GM12878 (cell line): ENCODE measurements at regions of chr4 and their contacts with region 1.

Region 1: GRCh38 chr4:85747882-85748491 is 273.0 kb downstream of the ARHGAP24 start:
- DNase-seq: no peak
- ATAC-seq: peak; percentile 95
- H3K4me3 ChIP-seq: no peak overlapping the region
- H3K27ac ChIP-seq: no peak overlapping the region
- H3K4me1 ChIP-seq: no peaks in the 10 kb centered on the region
- H3K27me3 ChIP-seq: no peaks in the 10 kb centered on the region; a peak in 1 of 4 replicates
- CTCF ChIP-seq: peak; percentile 74 to 79 (median 75)
- EP300 ChIP-seq: no peak
- POLR2A ChIP-seq: no peak
- RAD21 ChIP-seq: peak; percentile 98

Region 2: GRCh38 chr4:85092943-85093342 is 655.0 kb before region 1 on chr4:
- CTCF ChIA-PET with region 1: no interaction called
- POLR2A ChIA-PET with region 1: no interaction called
- RAD21 ChIA-PET with region 1: no interaction called
- SMC1A ChIA-PET with region 1: no interaction called
- in situ Hi-C with region 1: no loop called
- intact Hi-C with region 1: no loop called
- DNase-seq: no peak
- ATAC-seq: no peak
- H3K4me3 ChIP-seq: no peak overlapping the region
- H3K27ac ChIP-seq: no peak overlapping the region
- H3K4me1 ChIP-seq: no peaks in the 10 kb centered on the region
- H3K27me3 ChIP-seq: no peaks in the 10 kb centered on the region
- CTCF ChIP-seq: no peak
- EP300 ChIP-seq: no peak
- POLR2A ChIP-seq: no peak
- RAD21 ChIP-seq: no peak

Region 3: DNA sequence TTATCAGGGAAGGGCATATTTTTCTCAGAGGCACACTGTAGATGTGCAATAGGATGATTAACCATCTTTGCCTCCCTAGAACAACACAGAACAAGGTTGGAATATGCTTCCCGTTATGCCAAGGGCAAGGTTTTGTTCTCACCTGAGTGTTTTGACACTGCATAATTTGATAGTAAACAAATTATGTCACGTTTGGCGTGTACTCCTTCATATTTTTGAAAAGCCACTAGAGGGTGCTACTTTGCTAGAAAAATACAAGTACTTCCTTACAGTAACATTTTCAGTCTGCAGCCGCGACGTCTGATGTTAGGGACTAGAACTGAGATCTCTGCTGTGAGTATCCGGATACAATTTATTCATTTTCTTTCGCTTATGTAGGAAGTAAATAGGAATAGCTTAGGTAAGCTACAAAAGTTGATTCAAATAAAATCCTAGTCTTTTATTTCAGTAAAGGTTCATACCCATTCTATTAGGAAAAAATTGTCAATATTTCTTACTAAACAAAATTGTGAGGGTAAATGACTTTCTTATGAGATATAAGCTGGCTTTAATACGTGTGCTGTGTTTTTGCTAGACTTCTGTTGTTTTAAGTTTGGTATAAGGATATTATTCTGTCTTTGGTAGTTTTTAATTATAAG is 600.4 kb before region 1 on chr4:
- CTCF ChIA-PET with region 1: interaction called, 35 read pairs
- POLR2A ChIA-PET with region 1: no interaction called
- RAD21 ChIA-PET with region 1: interaction called, 16 read pairs
- SMC1A ChIA-PET with region 1: interaction called, 12 read pairs
- in situ Hi-C with region 1: loop called (anchors 5 kb)
- intact Hi-C with region 1: loop called (anchors 1 kb)
- DNase-seq: peak; percentile 11
- ATAC-seq: peak; percentile 93
- H3K4me3 ChIP-seq: no peak overlapping the region
- H3K27ac ChIP-seq: no peak overlapping the region
- H3K4me1 ChIP-seq: no peaks in the 10 kb centered on the region
- H3K27me3 ChIP-seq: no peaks in the 10 kb centered on the region
- CTCF ChIP-seq: peak; percentile 51 to 67 (median 53); a peak in 5 of 6 replicates
- EP300 ChIP-seq: no peak
- POLR2A ChIP-seq: no peak
- RAD21 ChIP-seq: peak; percentile 63

Region 4: DNA sequence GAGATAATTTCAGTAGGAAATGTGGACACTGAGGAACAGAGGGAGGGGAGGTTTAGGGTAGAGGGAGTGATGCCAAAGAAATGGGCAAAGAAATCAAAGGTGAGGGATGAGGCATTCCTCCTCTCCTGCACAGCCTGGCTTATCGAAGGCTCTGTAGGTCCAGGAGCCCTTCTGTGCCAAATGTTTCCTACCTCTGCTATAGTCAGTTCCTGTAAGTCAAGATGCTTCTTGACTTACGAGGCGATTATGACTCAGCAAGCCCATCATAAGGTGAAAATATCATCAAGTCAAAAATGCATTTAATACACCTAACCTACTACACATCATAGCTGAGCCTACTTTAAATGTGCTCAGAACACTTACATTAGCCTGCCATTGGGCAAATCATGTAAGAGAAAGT is 333.0 kb before region 1 on chr4:
- CTCF ChIA-PET with region 1: interaction called, 57 read pairs
- POLR2A ChIA-PET with region 1: interaction called, 4 read pairs
- RAD21 ChIA-PET with region 1: interaction called, 16 read pairs
- SMC1A ChIA-PET with region 1: interaction called, 22 read pairs
- in situ Hi-C with region 1: loop called (anchors 5 kb)
- intact Hi-C with region 1: loop called (anchors 1 kb)
- DNase-seq: no peak
- ATAC-seq: no peak
- H3K4me3 ChIP-seq: no peak overlapping the region
- H3K27ac ChIP-seq: no peak overlapping the region
- H3K4me1 ChIP-seq: no peaks in the 10 kb centered on the region
- H3K27me3 ChIP-seq: no peaks in the 10 kb centered on the region; a peak in 1 of 4 replicates
- CTCF ChIP-seq: no peak
- EP300 ChIP-seq: no peak
- POLR2A ChIP-seq: no peak
- RAD21 ChIP-seq: no peak

Region 5: DNA sequence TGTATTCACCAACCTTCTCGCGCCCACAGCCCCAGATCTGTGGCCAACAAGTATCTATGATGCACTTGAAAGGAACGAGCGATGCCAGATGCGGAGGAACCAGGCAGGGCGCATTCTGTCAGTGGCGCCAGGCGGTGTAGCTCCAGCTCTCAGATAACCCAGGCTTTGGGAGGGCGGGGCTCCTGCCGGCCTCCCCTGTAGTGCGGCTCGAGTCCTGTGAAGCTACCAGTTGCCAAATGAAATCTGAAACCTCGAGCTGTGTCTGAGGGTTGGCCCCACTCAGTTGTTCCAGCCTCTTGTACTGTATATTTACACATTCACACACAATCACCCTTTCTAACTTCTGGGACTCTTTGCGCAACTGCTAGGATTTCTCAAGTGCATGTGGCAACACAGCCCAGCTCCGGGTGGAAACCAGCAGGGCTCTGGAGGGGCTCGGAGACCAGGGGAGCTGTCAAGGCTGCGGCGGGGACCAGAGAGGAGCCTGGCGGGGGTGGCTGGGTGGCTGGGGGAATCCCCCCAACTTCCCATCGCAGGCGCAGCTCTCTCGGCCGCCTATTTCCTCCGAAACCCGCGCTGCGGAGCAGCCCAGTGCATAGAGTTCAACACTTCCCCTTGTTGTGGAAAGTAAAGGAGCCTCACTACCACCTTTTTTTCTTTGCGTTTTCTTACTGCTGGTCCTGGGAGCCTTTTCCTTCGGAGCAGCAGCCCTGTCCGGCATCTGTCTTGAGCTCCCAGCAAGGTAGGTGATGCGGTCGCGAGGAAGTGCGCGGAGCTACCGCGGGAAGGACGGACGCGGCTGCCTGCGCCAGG is 273.0 kb before region 1 on chr4 and contains the start of gene ARHGAP24:
- CTCF ChIA-PET with region 1: interaction called, 9 read pairs
- POLR2A ChIA-PET with region 1: no interaction called
- RAD21 ChIA-PET with region 1: no interaction called
- SMC1A ChIA-PET with region 1: no interaction called
- in situ Hi-C with region 1: no loop called
- intact Hi-C with region 1: loop called (anchors 5 kb)
- DNase-seq: peak; percentile 51
- ATAC-seq: peak; percentile 88
- H3K4me3 ChIP-seq: peak within 1 kb of the TSS; percentile 62
- H3K27ac ChIP-seq: no peak within 1 kb of the TSS
- H3K4me1 ChIP-seq: peaks cover 5% of the 10 kb centered on the region
- H3K27me3 ChIP-seq: peaks cover 0 to 2% of the 10 kb centered on the region in 2 experiments; a peak in 1 of 4 replicates
- CTCF ChIP-seq: no peak
- EP300 ChIP-seq: no peak
- POLR2A ChIP-seq: no peak
- RAD21 ChIP-seq: no peak
- polyA plus RNA-seq, gene ARHGAP24: 0.10 to 0.35 TPM

Region 6: GRCh38 chr4:85557016-85557901 is 190.7 kb before region 1 on chr4:
- CTCF ChIA-PET with region 1: interaction called, 3 read pairs
- POLR2A ChIA-PET with region 1: no interaction called
- RAD21 ChIA-PET with region 1: no interaction called
- SMC1A ChIA-PET with region 1: interaction called, 4 read pairs
- in situ Hi-C with region 1: no loop called
- intact Hi-C with region 1: loop called (anchors 5 kb)
- DNase-seq: peak; percentile 68
- ATAC-seq: peak; percentile 94
- H3K4me3 ChIP-seq: no peak overlapping the region
- H3K27ac ChIP-seq: peak overlapping the region; percentile 41
- H3K4me1 ChIP-seq: peaks cover 27% of the 10 kb centered on the region
- H3K27me3 ChIP-seq: no peaks in the 10 kb centered on the region
- CTCF ChIP-seq: no peak
- EP300 ChIP-seq: peak; percentile 65 to 90; a peak in 3 of 4 replicates
- POLR2A ChIP-seq: no peak
- RAD21 ChIP-seq: no peak; the same call in 1 of the 2 replicates

Region 7: GRCh38 chr4:85734424-85734831 is 13.6 kb before region 1 on chr4:
- CTCF ChIA-PET with region 1: interaction called, 35 read pairs
- POLR2A ChIA-PET with region 1: no interaction called
- RAD21 ChIA-PET with region 1: interaction called, 10 read pairs
- SMC1A ChIA-PET with region 1: interaction called, 5 read pairs
- in situ Hi-C with region 1: no loop called
- intact Hi-C with region 1: no loop called
- DNase-seq: no peak
- ATAC-seq: no peak
- H3K4me3 ChIP-seq: no peak overlapping the region
- H3K27ac ChIP-seq: no peak overlapping the region
- H3K4me1 ChIP-seq: no peaks in the 10 kb centered on the region
- H3K27me3 ChIP-seq: no peaks in the 10 kb centered on the region
- CTCF ChIP-seq: no peak
- EP300 ChIP-seq: no peak
- POLR2A ChIP-seq: no peak
- RAD21 ChIP-seq: no peak

Region 8: DNA sequence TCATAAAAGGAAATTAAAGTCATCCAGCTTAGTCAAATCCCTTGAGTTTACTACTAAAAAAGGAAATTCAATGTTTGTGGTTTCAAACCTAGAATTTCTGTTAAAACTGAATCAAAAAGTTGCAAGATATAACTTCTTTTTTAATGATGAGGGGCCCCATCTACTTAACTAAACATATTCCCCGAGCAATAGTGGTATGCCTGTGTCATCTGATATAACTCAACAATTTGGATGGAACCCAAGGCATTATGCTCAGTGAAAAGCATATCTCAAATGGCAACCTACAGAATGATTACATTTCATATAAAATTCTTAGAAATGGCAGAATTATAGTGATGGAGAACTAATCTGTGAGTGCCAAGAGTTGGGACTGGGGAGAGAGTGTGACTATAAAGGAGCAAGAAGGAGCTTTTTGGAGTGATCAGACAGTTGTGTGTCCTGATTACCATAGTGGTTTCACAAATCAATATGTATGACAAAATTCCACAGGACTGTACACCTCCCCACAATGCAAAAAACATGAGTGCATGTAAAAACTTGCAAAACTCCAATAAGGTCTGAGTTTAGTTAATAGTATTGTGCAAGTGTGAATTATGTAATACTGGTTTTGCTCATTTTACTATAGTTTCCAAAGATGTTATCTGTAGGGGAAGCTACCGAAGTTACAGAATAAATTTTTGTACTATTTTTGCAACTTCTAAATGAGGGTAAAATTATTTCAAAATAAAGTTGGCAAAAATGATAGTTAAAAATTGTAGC is 50.2 kb after region 1 on chr4:
- CTCF ChIA-PET with region 1: interaction called, 22 read pairs
- POLR2A ChIA-PET with region 1: no interaction called
- RAD21 ChIA-PET with region 1: interaction called, 4 read pairs
- SMC1A ChIA-PET with region 1: interaction called, 5 read pairs
- in situ Hi-C with region 1: no loop called
- intact Hi-C with region 1: no loop called
- DNase-seq: no peak
- ATAC-seq: no peak
- H3K4me3 ChIP-seq: no peak overlapping the region
- H3K27ac ChIP-seq: no peak overlapping the region
- H3K4me1 ChIP-seq: no peaks in the 10 kb centered on the region
- H3K27me3 ChIP-seq: no peaks in the 10 kb centered on the region
- CTCF ChIP-seq: no peak
- EP300 ChIP-seq: no peak
- POLR2A ChIP-seq: no peak
- RAD21 ChIP-seq: no peak